Left ventricle myocardium superior (tissue), 1 donor: ENCODE measurements at regions of chr10 and their contacts with region 1.

Region 1: DNA sequence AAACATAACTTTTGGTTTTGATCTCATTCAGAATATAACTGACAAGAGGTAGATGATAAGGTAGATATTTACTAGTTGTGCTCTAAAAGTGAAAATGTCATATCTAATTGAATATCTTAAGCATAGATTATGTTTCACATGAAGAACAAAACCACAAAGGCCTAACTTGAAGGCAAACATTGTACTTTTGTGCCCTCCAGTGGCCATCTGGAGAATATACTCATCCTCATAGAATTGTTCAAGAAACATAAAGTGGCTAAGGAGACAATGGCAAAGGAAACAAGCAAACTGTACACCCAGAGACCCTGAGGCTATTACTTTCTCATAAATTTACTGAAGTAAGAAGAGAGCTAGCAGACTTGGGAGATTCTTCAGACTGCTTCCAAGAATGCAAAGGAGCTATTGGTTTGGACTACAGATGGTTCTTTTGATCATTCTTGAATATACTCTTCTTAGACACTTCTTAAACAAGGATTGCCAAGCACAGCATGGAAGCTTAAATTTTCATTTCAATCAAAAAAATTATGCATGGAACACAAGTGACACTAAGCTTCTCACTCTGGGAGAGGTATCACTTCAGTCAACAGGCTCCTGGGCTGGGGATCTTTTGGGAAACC is 98.2 kb upstream of the DKK1 start:
- DNase-seq: no peak
- ATAC-seq: peak; percentile 64

Region 2: GRCh38 chr10:50972591-50972990 is 1243.3 kb before region 1 on chr10:
- intact Hi-C with region 1: no loop called
- DNase-seq: no peak
- ATAC-seq: peak; percentile 26

Region 3: DNA sequence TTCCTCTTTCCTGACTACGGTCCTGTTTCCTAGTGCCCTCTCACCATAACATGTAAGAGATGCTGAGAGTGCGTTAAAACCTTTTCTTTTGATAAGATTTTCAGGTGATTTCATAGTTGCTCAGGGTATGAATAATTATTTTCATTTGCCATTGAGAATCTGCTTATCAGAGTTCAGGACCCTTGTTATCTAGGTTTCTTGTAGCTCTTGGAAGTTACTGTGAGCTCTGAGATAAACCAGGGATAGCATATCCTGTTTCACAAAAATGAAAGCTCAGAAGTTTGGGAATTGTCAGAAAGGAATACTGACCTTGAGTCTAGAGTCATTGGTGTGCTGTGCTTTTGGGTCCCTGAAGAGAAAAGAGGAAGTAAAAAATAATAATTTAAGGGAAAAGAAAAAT is 1218.4 kb before region 1 on chr10:
- intact Hi-C with region 1: loop called (anchors 5 kb)
- DNase-seq: no peak
- ATAC-seq: no peak